ENCODE measurements at regions of chr3 and their contacts with region 1.

Region 1: DNA sequence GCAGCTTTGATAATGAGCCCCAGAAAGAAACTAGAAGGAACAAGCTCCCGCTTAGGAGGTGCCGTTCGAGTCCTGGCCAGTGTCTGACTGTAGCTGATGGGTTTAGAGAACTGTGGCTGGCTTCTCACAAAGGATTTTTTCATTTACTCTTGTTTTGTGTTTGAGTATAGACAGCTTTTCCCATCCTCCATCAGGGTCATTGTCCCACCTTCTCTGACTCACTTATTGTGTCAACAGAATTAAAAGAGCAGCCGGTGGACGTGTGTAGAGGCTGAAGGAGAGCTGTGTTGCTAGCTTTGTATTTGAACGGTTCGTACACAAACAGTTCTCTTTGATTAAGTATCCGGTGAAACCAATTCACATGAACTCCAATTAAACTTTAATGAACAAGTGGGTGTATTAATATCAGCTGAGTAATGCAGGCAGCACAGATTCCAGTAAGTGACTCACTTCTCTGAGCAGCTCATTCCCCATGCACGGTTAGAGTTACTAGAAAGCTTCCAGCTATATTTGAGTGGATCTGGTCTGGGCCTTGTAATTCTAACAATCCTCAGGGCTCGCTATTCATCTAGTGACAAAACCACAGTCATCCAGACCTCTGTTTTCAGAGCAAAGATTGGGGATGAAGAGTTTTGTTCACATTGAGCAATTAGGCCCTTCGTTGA is 141.0 kb downstream of the LPP start:
- DNase-seq: no peak
- ATAC-seq: no peak
- H3K4me3 ChIP-seq: no peak overlapping the region
- H3K4me3 Mint-ChIP-seq: peak overlapping the region; percentile 49
- H3K27ac ChIP-seq: no peak overlapping the region
- H3K27ac Mint-ChIP-seq: no peak overlapping the region
- H3K4me1 ChIP-seq: peaks cover 55 to 57% of the 10 kb centered on the region in 2 donors
- H3K4me1 Mint-ChIP-seq: peaks cover 86% of the 10 kb centered on the region
- H3K27me3 ChIP-seq: no peaks in the 10 kb centered on the region
- H3K27me3 Mint-ChIP-seq: no peaks in the 10 kb centered on the region
- CTCF ChIP-seq: no peak

Region 2: GRCh38 chr3:188309437-188310269 is 14.7 kb after region 1 on chr3:
- CTCF ChIA-PET with region 1: interaction called, 9 read pairs
- POLR2A ChIA-PET with region 1: no interaction called
- intact Hi-C with region 1: loop called (anchors 2 kb)
- DNase-seq: peak; percentile 39
- ATAC-seq: peak; percentile 51
- H3K4me3 ChIP-seq: peak overlapping the region in 2 of 5 experiments; percentile 1 to 11
- H3K4me3 Mint-ChIP-seq: peak overlapping the region; percentile 78
- H3K27ac ChIP-seq: peak overlapping the region in 1 of 2 donors; percentile 42
- H3K27ac Mint-ChIP-seq: peak overlapping the region; percentile 46
- H3K4me1 ChIP-seq: peaks cover 18 to 19% of the 10 kb centered on the region in 2 donors
- H3K4me1 Mint-ChIP-seq: peaks cover 33% of the 10 kb centered on the region
- H3K27me3 ChIP-seq: no peaks in the 10 kb centered on the region
- H3K27me3 Mint-ChIP-seq: no peaks in the 10 kb centered on the region
- CTCF ChIP-seq: no peak

Region 3: GRCh38 chr3:188339410-188340295 is 44.7 kb after region 1 on chr3:
- CTCF ChIA-PET with region 1: no interaction called
- POLR2A ChIA-PET with region 1: no interaction called
- intact Hi-C with region 1: loop called (anchors 5 kb)
- DNase-seq: peak; percentile 48
- ATAC-seq: peak; percentile 86
- H3K4me3 ChIP-seq: peak overlapping the region in 2 of 5 experiments; percentile 0 to 8
- H3K4me3 Mint-ChIP-seq: peak overlapping the region; percentile 68
- H3K27ac ChIP-seq: peak overlapping the region; percentile 25 to 60
- H3K27ac Mint-ChIP-seq: peak overlapping the region; percentile 85
- H3K4me1 ChIP-seq: peaks cover 20 to 23% of the 10 kb centered on the region in 2 donors
- H3K4me1 Mint-ChIP-seq: peaks cover 38% of the 10 kb centered on the region
- H3K27me3 ChIP-seq: no peaks in the 10 kb centered on the region
- H3K27me3 Mint-ChIP-seq: no peaks in the 10 kb centered on the region
- CTCF ChIP-seq: no peak

Measured in B cell (primary cell).